ENCODE measurements at regions of chr3 and their contacts with region 1.

Region 1: DNA sequence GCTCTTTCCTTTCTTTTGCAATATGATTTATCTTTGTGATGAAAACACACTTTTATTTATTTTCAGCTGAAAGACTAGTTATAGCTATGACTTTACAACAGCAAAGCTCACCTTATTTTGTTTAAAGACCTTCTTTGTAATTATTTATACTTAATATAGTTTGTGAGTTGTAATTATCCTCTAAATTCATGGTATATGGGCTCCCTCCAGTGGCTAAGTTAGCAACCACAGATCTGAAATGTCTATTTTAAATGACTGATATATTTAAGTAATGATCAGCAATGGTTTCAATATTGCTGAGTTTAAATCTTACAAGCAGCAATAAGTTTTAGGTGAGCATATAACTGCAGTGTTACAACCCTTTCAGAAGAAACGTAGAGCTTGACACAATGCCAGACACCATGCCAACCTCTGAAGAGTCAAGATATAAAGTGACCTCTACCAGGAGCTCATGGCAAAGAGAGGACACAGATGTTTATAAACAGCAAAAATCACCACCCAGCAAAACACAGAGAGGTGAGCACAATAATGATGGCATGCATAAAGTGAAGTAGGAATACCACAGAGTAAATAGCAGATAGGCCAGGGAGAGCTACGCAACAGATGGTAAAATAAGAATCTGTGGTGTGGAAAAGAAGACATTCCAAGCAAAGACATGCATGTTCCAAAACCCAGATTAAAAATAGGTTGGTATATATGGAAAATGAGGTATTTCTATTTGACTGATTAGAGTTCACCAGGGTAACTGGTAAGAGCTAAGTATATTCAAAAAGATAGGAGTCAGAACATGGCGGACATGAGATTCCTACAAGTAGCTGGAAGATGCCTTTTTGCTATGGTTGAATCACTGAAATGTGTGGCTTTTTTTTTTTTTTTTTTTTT is 143.7 kb upstream of the ZNF385D start:
- DNase-seq: peak; percentile 47
- H3K4me3 Mint-ChIP-seq: no peak overlapping the region
- H3K27ac Mint-ChIP-seq: no peak overlapping the region
- H3K4me1 Mint-ChIP-seq: no peaks in the 10 kb centered on the region
- H3K27me3 Mint-ChIP-seq: no peaks in the 10 kb centered on the region
- CTCF ChIP-seq: peak; percentile 67

Region 2: GRCh38 chr3:20225769-20226168 is 1668.9 kb before region 1 on chr3:
- CTCF ChIA-PET with region 1: no interaction called
- POLR2A ChIA-PET with region 1: no interaction called
- intact Hi-C with region 1: loop called (anchors 5 kb)
- DNase-seq: peak; percentile 39
- H3K4me3 Mint-ChIP-seq: no peak overlapping the region
- H3K27ac Mint-ChIP-seq: no peak overlapping the region
- H3K4me1 Mint-ChIP-seq: no peaks in the 10 kb centered on the region
- H3K27me3 Mint-ChIP-seq: no peaks in the 10 kb centered on the region
- CTCF ChIP-seq: peak; percentile 37

Region 3: GRCh38 chr3:20511863-20512505 is 1382.7 kb before region 1 on chr3:
- CTCF ChIA-PET with region 1: interaction called, 37 read pairs
- POLR2A ChIA-PET with region 1: no interaction called
- intact Hi-C with region 1: loop called (anchors 1 kb)
- DNase-seq: peak; percentile 62
- H3K4me3 Mint-ChIP-seq: no peak overlapping the region
- H3K27ac Mint-ChIP-seq: no peak overlapping the region
- H3K4me1 Mint-ChIP-seq: peaks cover 5% of the 10 kb centered on the region
- H3K27me3 Mint-ChIP-seq: no peaks in the 10 kb centered on the region
- CTCF ChIP-seq: peak; percentile 76

Region 4: GRCh38 chr3:21017115-21017852 is 877.4 kb before region 1 on chr3:
- CTCF ChIA-PET with region 1: interaction called, 7 read pairs
- POLR2A ChIA-PET with region 1: interaction called, 3 read pairs
- intact Hi-C with region 1: loop called (anchors 10 kb)
- DNase-seq: peak; percentile 90
- H3K4me3 Mint-ChIP-seq: peak overlapping the region; percentile 26
- H3K27ac Mint-ChIP-seq: no peak overlapping the region
- H3K4me1 Mint-ChIP-seq: peaks cover 17% of the 10 kb centered on the region
- H3K27me3 Mint-ChIP-seq: no peaks in the 10 kb centered on the region
- CTCF ChIP-seq: peak; percentile 29

Region 5: DNA sequence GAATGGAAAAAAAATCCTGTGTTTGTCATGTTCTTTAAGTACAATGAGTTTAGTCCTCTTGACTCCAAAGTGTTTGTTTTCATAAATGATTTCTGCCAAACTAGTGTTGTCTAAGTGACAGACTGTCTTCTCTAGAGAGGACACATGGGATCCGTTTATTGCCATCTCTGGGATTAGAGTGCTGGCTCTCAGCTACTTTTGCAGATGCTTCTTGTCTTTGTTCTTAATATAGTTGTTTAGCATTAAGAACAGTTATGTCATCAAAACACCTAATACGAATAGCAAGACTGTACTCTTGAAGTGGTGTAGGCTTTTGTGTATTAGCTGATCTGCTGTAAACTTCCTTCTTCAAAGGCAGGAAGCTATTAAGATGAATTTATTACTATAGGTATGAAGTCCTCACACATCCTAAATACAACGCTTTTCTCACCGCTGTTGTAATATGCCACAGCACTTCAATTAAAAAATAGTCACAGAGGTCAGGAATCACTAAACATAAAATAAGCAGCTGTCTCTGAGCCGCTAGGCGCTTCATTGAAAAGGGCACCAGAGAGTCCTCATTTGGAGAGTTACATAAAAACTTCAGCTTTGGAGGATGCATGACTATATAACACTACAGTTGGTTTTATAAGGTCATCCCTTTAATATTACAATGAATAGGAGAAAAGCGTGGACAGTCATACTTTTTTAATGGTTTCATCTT is 15.4 kb before region 1 on chr3:
- CTCF ChIA-PET with region 1: interaction called, 10 read pairs
- POLR2A ChIA-PET with region 1: no interaction called
- intact Hi-C with region 1: no loop called
- DNase-seq: no peak
- H3K4me3 Mint-ChIP-seq: no peak overlapping the region
- H3K27ac Mint-ChIP-seq: no peak overlapping the region
- H3K4me1 Mint-ChIP-seq: no peaks in the 10 kb centered on the region
- H3K27me3 Mint-ChIP-seq: no peaks in the 10 kb centered on the region
- CTCF ChIP-seq: no peak

Region 6: DNA sequence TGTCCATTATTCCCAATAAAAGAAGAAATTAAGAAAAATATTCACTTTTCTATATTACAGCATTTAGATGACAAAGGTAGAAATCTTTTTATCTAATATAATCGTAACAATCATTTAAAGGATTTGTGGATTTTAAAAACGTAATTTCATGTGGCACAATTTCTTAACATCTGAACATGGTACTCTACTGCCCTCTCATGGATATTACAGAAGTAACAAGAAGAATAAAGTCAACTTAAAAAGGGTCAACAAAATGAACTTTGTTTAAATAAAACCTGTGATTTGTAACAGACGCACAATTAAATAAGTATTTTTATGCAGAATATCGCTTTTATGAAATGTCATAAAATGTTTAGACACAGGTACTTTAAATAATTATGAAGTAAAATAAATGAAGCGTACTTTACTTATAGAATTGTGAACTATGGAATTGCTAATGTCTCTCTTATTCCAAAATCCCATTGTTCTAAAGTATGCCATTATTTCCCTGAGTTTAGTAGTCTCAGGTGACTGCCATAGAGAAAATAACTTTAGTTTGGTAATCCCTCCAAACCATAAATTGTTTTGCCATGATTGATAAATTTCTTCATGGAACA is 223.1 kb after region 1 on chr3:
- CTCF ChIA-PET with region 1: no interaction called
- POLR2A ChIA-PET with region 1: no interaction called
- intact Hi-C with region 1: loop called (anchors 5 kb)
- DNase-seq: peak; percentile 56
- H3K4me3 Mint-ChIP-seq: no peak overlapping the region
- H3K27ac Mint-ChIP-seq: no peak overlapping the region
- H3K4me1 Mint-ChIP-seq: peaks cover 17% of the 10 kb centered on the region
- H3K27me3 Mint-ChIP-seq: no peaks in the 10 kb centered on the region
- CTCF ChIP-seq: peak; percentile 51

Region 7: DNA sequence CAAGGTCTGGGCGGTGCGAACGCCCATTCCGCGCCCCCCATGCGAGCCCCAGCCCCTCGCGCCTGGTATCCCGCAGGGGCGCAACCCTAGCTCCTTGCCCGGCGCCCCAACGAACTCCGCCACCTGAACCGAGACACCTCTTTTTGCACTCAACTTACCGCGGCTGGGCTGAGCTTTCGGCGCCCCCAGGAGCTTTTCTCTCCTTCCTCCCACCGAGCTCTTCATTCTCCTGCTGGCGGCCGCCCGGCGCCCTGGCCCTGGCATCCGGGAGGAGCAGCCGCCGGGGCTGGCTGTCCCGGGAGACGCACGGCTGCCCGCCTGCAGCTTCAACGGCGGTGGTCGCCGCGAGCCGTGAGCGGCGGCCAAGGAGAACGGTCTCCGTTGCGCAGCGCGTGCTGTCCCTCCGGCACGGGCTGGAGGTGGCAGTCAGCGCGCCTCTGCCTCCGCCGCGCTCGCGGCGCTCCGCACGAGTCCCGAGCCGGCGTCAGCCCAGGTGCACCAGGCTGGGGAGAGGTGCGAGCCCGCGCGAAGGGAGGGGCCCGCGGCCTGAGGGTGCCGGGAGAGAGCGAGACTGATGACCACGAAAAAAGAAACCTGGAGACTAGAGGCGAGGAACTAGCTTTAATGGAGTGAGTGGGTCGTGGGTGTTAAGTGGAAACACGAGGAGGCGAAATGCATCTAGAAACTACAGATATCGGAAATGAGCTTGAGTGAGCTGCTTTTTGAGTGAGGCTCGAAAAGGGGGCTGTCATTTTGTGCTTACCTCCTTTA is 477.8 kb after region 1 on chr3:
- CTCF ChIA-PET with region 1: no interaction called
- POLR2A ChIA-PET with region 1: no interaction called
- intact Hi-C with region 1: no loop called
- DNase-seq: no peak
- H3K4me3 Mint-ChIP-seq: no peak overlapping the region
- H3K27ac Mint-ChIP-seq: no peak overlapping the region
- H3K4me1 Mint-ChIP-seq: peaks cover 7% of the 10 kb centered on the region
- H3K27me3 Mint-ChIP-seq: no peaks in the 10 kb centered on the region
- CTCF ChIP-seq: no peak